RWPE1 (cell line): ENCODE measurements at regions of chr1 and their contacts with region 1.

Region 1: GRCh38 chr1:115609021-115609420 is 32.7 kb upstream of the VANGL1 start:
- DNase-seq: no peak
- H3K27ac ChIP-seq: no peak overlapping the region
- CTCF ChIP-seq: no peak

Region 2: DNA sequence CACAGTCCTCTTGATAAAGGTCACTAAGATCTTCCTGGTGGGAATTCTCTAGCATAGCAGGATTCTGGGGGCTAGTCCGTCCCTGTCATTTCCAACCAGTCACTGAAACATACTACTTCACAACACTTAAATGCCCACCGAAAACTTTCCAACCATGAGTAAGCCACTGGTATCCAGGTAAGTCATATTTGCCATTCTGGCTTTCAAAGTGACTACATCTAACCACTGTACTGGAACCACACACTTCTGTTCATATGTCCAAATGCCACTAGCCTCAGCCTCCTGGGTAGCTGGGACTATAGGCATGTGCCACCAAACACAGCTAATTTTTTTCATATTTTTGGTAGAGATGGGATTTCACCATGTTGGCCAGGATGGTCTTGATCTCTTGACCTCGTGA is 31.5 kb before region 1 on chr1:
- CTCF ChIA-PET with region 1: no interaction called
- POLR2A ChIA-PET with region 1: no interaction called
- DNase-seq: no peak
- H3K27ac ChIP-seq: no peak overlapping the region
- CTCF ChIP-seq: no peak

Region 3: GRCh38 chr1:115706587-115707425 is 97.8 kb after region 1 on chr1:
- CTCF ChIA-PET with region 1: interaction called, 13 read pairs
- POLR2A ChIA-PET with region 1: no interaction called
- DNase-seq: no peak
- H3K27ac ChIP-seq: no peak overlapping the region
- CTCF ChIP-seq: peak; percentile 67

Region 4: DNA sequence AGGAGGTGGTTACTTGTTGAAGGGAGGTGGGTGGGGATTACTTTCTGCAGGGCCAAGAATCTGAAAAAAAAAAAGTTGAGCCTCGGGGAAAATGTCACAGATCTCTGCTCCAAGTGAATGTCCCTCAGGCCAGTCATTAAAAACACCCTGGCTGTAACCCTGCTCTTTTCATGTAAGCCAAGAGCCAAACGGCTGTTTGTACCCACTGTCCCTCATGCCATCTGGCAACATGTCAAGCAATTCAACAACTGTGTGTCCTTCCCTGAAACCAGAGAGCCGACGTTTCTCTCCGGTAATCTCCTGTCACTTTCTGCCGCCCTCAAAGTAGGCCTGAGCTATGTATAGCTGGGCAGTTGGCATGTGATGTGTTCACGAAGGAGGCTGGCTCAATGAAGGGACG is 144.8 kb after region 1 on chr1:
- CTCF ChIA-PET with region 1: no interaction called
- POLR2A ChIA-PET with region 1: no interaction called
- DNase-seq: no peak
- H3K27ac ChIP-seq: no peak overlapping the region
- CTCF ChIP-seq: no peak

Region 5: GRCh38 chr1:115764541-115764940 is 155.5 kb after region 1 on chr1:
- CTCF ChIA-PET with region 1: interaction called, 28 read pairs
- POLR2A ChIA-PET with region 1: no interaction called
- DNase-seq: peak; percentile 26
- H3K27ac ChIP-seq: no peak overlapping the region
- CTCF ChIP-seq: no peak; the same call in 1 of the 2 replicates

Region 6: DNA sequence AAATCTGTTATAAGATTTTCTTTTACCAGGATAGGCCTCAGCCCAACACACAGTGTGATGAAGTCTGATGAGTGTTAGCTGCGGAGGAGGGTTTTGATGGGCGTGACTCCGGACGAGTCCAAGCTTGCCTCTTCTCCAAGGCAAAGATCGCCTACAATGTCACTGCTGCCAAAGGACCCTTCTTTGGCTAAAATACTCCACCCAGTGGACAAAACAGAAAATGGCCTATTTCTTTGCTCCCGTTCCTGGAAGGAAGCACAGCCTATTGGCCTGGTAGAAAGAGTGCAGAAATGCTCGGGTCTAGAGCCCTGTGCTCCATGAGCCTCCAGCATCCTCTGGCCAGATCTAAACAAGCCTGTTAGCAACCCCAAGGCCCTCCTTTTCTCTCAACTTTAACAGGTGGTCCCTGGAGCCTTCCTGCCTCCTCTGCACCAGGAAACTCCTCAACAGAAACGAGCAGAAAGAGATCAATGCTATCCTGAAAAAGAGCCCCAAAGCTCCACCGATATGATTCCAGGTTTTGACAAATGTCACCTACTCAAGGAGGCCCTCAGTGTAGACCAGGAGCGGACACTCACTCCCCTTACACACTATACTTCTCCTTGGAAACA is 162.9 kb after region 1 on chr1:
- CTCF ChIA-PET with region 1: interaction called, 11 read pairs
- POLR2A ChIA-PET with region 1: no interaction called
- DNase-seq: peak; percentile 89
- H3K27ac ChIP-seq: peak overlapping the region; percentile 81
- CTCF ChIP-seq: peak; percentile 73